Breast epithelium (tissue), 4 donors: ENCODE measurements at regions of chr1 and their contacts with region 1.

Region 1: DNA sequence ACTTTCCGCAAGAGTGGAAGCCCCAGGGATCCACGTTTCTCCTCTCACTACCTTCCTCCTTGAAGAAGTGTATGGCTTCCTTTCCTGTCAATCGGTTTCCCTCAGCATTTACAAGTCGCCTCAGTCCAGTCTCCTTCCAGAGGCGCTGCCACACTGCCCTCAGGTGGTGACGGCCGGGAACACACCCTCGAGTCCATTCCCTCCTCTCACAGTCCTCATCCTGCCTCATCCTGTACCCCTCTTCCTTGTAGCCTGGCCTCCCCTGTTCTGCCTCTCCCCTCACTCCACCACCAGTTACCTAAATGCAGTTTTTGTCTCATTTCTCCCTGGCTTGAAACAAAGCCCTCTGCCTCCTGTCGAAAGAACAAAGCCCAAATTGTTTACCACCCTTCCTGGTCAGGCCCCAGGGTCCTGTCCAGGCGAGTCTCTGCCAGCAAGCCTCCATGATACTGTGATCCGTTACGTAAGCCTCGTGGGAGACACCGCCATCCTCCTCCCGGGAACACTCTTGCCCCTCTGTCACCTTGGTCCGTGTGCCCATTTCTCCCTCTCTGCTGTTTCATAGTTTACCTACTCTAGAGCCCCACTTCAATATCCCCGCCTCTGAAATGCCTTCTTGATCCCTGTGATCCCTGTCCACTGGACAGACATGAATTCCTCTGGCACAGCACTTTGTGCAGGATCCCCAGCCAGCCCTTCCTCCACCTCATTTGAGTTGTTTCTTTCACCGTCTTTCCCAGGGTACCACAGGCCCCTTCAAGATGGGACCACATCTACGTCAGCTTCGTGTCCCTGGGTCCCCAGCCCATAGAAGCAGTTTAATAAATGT is 23.3 kb upstream of the LSM10 start:
- DNase-seq: peak; percentile 85 to 92
- H3K4me3 ChIP-seq: no peak overlapping the region
- H3K27ac ChIP-seq: peak overlapping the region; percentile 68
- H3K4me1 ChIP-seq: peaks cover 0 to 6% of the 10 kb centered on the region in 2 donors
- H3K27me3 ChIP-seq: no peaks in the 10 kb centered on the region
- CTCF ChIP-seq: peak; percentile 92 to 94 (median 93)
- POLR2A ChIP-seq: no peak

Region 2: GRCh38 chr1:36350659-36351226 is 70.3 kb before region 1 on chr1:
- intact Hi-C with region 1: loop called (anchors 10 kb)
- DNase-seq: peak in 1 of 2 donors; percentile 57
- H3K4me3 ChIP-seq: peak overlapping the region in 1 of 3 donors; percentile 29
- H3K27ac ChIP-seq: peak overlapping the region; percentile 88 to 90
- H3K4me1 ChIP-seq: peaks cover 6 to 23% of the 10 kb centered on the region in 2 donors
- H3K27me3 ChIP-seq: no peaks in the 10 kb centered on the region
- CTCF ChIP-seq: no peak
- POLR2A ChIP-seq: no peak

Region 3: GRCh38 chr1:36436817-36437216 is 15.8 kb after region 1 on chr1:
- intact Hi-C with region 1: no loop called
- DNase-seq: no peak
- H3K4me3 ChIP-seq: no peak overlapping the region
- H3K27ac ChIP-seq: peak overlapping the region in 1 of 2 donors; percentile 43
- H3K4me1 ChIP-seq: no peaks in the 10 kb centered on the region
- H3K27me3 ChIP-seq: no peaks in the 10 kb centered on the region
- CTCF ChIP-seq: no peak
- POLR2A ChIP-seq: no peak